MCF 10A (cell line): ENCODE measurements at regions of chr12 and their contacts with region 1.

Region 1: DNA sequence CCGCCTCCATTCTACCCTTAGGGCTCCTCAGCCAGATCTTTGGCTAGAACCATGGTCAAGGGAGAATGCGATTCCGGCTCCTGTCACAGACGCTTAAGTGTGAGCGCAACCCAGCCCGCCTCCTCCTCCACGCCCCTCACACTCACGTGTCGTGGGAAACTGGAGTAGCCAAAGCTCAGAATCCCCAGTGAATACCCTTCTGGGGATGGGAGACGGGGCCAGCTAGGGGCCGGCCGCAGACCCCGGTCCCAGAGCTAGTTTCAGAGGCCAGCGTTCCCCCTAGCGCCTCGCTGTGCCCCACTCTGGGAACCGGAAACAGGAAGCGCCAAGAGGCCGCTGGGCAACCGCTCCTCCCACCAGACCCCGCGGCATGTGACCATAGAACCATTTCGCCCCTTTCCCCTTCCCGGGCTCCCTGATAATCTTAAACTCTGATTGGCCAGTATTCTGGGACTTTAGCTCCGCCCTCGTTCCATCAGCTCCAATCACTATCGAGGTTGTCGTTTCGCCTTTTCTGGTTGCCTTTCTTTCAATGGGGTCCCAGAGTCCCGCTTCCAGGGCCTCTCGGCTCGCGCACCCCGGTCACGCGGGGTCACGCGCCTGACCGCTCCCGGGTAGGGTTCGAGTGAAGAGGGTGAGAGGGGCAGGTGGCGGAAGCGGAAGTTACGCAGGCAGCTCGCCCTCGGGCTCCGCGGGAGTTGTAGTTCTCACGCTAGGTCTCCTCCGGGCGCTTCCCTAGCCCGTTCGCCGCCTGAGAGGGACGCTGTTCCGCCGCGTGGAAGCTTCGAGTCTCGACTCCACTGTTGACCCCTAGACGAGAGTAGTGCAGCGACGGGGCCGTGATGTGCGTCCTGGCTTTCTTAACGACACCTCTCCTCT is at the start of gene M6PR:
- DNase-seq: peak; percentile 97
- H3K4me3 Mint-ChIP-seq: peak within 1 kb of the TSS; percentile 100
- H3K27ac Mint-ChIP-seq: peak within 1 kb of the TSS; percentile 100
- H3K4me1 Mint-ChIP-seq: peaks cover 20% of the 10 kb centered on the region
- H3K27me3 Mint-ChIP-seq: no peaks in the 10 kb centered on the region
- CTCF ChIP-seq: peak; percentile 15
- total RNA-seq, gene M6PR: 130 and 159 TPM in 2 replicates

Region 2: DNA sequence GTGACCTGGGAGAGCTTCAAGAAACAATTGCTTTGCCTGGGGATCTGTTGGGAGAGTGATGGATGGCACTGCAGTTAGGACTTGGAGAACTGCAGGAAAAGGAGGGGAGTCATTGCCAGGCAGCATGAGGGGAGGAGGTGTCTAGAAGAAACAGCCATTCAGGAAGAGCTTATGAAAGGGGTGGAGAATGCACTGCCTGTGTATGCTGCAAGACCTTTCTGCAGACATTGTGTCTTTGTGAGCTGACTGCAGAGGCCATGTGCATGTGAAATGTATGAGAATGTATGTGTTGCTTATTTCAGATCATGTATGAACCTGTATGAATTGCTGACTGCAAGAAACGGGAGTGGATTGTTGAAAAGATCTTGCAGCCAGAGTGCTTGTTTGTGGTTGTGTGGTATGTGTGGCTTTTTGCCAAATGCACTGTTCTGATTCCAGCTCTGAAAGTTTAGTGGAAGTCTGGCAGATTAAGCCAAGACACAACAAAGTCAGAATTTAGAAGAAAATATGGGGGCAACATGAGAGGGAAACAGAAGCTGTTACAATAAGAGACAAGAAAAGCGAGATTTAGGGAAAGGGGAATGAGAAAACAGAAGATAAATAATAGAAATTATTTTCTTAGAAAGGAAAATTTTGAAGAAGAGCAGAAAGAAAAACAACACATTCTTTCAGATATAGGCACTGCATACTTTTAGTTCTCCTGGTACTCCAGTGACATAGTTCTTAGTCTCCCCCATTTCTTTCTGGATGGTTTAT is 261.6 kb before region 1 on chr12:
- CTCF ChIA-PET with region 1: interaction called, 5 read pairs
- POLR2A ChIA-PET with region 1: interaction called, 10 read pairs
- intact Hi-C with region 1: no loop called
- DNase-seq: peak; percentile 77
- H3K4me3 Mint-ChIP-seq: no peak overlapping the region
- H3K27ac Mint-ChIP-seq: no peak overlapping the region
- H3K4me1 Mint-ChIP-seq: no peaks in the 10 kb centered on the region
- H3K27me3 Mint-ChIP-seq: no peaks in the 10 kb centered on the region
- CTCF ChIP-seq: no peak

Region 3: DNA sequence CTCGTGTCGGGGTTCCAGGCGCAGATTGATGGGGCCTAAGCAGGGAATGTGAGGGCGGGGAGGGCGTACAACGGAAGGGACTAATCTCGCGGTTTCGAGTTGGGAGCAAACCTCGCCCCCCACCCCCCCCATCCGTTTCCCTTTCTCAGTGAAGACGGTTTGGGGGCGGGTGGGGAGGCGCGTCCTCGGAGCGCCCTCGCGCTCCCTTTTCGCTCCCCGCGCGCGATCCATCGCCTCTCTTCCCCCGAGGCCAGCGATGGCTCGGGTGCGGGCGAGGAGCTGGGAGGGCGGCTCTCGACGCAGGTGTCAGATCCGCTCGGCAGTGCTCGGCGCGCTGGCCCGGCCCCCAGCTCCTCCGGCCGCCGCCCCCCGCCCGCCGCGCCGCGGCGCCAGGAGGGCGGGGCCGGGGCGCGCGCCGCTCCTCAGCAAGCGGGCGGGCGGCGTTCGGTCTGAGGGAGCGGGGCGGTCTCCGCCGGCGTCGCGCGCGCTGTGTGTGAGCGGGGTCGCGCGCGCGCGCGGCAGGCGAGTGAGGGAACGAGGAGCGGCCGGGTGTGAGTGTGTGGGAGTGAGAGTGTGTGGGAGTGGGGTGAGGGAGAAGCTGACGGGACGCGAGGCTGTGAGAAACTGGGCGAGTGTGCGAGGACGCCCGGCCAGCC is 252.0 kb before region 1 on chr12 and contains the start of gene RIMKLB:
- CTCF ChIA-PET with region 1: interaction called, 3 read pairs
- POLR2A ChIA-PET with region 1: interaction called, 4 read pairs
- intact Hi-C with region 1: loop called (anchors 5 kb)
- DNase-seq: peak; percentile 60
- H3K4me3 Mint-ChIP-seq: peak within 1 kb of the TSS; percentile 93
- H3K27ac Mint-ChIP-seq: peak within 1 kb of the TSS; percentile 46
- H3K4me1 Mint-ChIP-seq: peaks cover 13% of the 10 kb centered on the region
- H3K27me3 Mint-ChIP-seq: no peaks in the 10 kb centered on the region
- CTCF ChIP-seq: no peak
- total RNA-seq, gene RIMKLB: 32.7 and 34.4 TPM in 2 replicates

Region 4: GRCh38 chr12:8722286-8722685 is 227.3 kb before region 1 on chr12:
- CTCF ChIA-PET with region 1: no interaction called
- POLR2A ChIA-PET with region 1: no interaction called
- intact Hi-C with region 1: no loop called
- DNase-seq: no peak
- H3K4me3 Mint-ChIP-seq: no peak overlapping the region
- H3K27ac Mint-ChIP-seq: no peak overlapping the region
- H3K4me1 Mint-ChIP-seq: peaks cover 6% of the 10 kb centered on the region
- H3K27me3 Mint-ChIP-seq: no peaks in the 10 kb centered on the region
- CTCF ChIP-seq: no peak

Region 5: GRCh38 chr12:8914716-8915526 is 34.7 kb before region 1 on chr12:
- CTCF ChIA-PET with region 1: interaction called, 30 read pairs
- POLR2A ChIA-PET with region 1: interaction called, 76 read pairs
- intact Hi-C with region 1: loop called (anchors 2 kb)
- DNase-seq: peak; percentile 61
- H3K4me3 Mint-ChIP-seq: no peak overlapping the region
- H3K27ac Mint-ChIP-seq: no peak overlapping the region
- H3K4me1 Mint-ChIP-seq: peaks cover 16% of the 10 kb centered on the region
- H3K27me3 Mint-ChIP-seq: no peaks in the 10 kb centered on the region
- CTCF ChIP-seq: no peak

Region 6: DNA sequence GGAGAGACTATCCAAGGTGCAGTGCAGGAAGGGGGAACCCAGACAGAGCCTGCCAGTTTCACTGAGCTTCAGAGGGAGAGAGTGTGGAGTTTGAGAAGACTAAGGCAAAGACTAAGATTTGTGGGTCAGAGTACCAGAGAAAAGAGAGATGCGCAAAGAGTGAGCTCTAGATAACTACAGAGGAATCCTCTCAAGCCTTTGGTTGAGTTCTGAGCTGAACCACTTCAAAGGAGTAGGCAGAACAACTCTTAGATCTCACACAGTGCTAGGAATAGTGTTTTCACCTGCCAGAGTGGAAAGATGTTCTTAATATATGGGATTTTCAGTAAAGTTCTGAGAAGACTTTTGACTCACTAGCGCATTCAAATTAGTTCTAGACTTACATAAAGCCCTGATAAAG is 10.6 kb after region 1 on chr12:
- CTCF ChIA-PET with region 1: interaction called, 4 read pairs
- POLR2A ChIA-PET with region 1: interaction called, 17 read pairs
- intact Hi-C with region 1: no loop called
- DNase-seq: no peak
- H3K4me3 Mint-ChIP-seq: no peak overlapping the region
- H3K27ac Mint-ChIP-seq: no peak overlapping the region
- H3K4me1 Mint-ChIP-seq: no peaks in the 10 kb centered on the region
- H3K27me3 Mint-ChIP-seq: no peaks in the 10 kb centered on the region
- CTCF ChIP-seq: no peak

Region 7: GRCh38 chr12:9039397-9039977 is 89.9 kb after region 1 on chr12:
- CTCF ChIA-PET with region 1: interaction called, 41 read pairs
- POLR2A ChIA-PET with region 1: interaction called, 9 read pairs
- intact Hi-C with region 1: loop called (anchors 1 kb)
- DNase-seq: peak; percentile 57
- H3K4me3 Mint-ChIP-seq: no peak overlapping the region
- H3K27ac Mint-ChIP-seq: no peak overlapping the region
- H3K4me1 Mint-ChIP-seq: no peaks in the 10 kb centered on the region
- H3K27me3 Mint-ChIP-seq: no peaks in the 10 kb centered on the region
- CTCF ChIP-seq: peak; percentile 78

Region 8: GRCh38 chr12:9064201-9064814 is 114.7 kb after region 1 on chr12:
- CTCF ChIA-PET with region 1: interaction called, 8 read pairs
- POLR2A ChIA-PET with region 1: interaction called, 10 read pairs
- intact Hi-C with region 1: no loop called
- DNase-seq: peak; percentile 71
- H3K4me3 Mint-ChIP-seq: peak overlapping the region; percentile 79
- H3K27ac Mint-ChIP-seq: peak overlapping the region; percentile 79
- H3K4me1 Mint-ChIP-seq: peaks cover 13% of the 10 kb centered on the region
- H3K27me3 Mint-ChIP-seq: no peaks in the 10 kb centered on the region
- CTCF ChIP-seq: peak; percentile 38